Activated naive CD4-positive, alpha-beta T cell treated with anti-CD3 and anti-CD28 coated beads for 36 hours (primary cell): ENCODE measurements at regions of chr19 and their contacts with region 1.

Region 1: DNA sequence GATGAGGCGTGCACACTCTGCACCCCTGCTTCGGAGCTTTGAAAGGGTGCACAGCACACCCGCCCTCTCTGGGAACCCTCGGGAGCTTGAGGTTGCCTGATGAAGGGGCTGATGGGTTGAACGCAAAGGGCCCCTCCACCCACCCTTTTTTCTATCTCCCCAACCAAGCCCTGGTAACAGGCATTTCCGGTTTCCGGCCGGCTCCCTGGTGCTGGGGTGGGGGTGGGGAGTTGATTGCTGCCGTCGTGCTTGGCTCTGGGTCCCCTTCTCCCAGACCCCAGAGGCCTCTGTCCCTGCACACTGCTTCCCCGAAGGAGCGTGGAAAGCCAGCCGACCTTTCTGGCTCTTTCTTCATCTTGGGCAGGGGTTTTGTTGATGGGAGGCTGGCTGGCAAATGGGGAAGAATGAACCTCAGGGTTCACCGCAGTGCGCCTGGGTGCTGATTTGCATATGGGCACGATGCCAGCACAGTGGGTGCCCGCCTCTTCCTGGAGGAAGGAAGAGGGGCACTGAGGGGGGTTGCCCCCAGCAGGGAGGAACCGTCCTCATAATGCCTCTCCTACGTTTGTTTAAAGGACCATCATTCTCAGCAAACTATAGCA is 29.1 kb downstream of the VAV1 start:
- DNase-seq: peak; percentile 90
- H3K4me3 Mint-ChIP-seq: peak overlapping the region; percentile 69
- H3K27ac Mint-ChIP-seq: peak overlapping the region; percentile 89
- H3K4me1 Mint-ChIP-seq: peaks cover 65% of the 10 kb centered on the region
- H3K27me3 Mint-ChIP-seq: no peaks in the 10 kb centered on the region

Region 2: DNA sequence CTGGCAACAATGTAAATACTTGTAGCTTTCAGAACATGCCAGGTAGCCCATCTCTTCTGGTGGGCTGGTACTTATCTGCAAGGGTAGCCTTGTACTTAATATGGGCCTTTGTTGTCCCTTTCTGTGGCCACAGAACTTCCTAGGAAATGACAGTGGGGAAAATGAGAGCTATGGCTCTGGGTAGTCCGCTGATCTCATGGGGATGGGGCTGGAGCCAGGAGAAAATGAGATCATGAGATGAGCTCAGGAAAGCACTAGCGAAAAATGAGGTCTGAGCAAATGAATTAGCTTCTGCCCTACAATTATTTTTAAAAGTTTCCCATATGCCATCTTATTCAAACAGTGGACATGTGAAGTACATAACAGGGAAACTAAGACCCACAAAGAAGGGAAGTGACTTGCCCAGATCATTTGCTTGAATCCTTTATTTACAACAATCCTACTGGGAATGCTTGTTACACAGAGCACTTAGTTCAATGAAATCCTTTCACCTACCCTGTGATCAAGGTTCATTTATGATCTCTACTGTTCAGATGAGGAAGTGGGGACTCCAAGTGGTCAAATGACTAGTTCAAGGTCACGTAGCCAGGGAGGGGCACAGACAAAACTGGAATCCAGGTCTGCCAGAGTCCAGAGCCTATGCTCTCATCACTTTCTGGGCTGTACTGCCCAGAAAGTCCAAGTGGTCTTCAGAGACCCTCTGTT is 1548.0 kb before region 1 on chr19:
- CTCF ChIA-PET with region 1: no interaction called
- intact Hi-C with region 1: no loop called
- DNase-seq: no peak
- H3K4me3 Mint-ChIP-seq: no peak overlapping the region
- H3K27ac Mint-ChIP-seq: no peak overlapping the region
- H3K4me1 Mint-ChIP-seq: no peaks in the 10 kb centered on the region
- H3K27me3 Mint-ChIP-seq: no peaks in the 10 kb centered on the region

Region 3: DNA sequence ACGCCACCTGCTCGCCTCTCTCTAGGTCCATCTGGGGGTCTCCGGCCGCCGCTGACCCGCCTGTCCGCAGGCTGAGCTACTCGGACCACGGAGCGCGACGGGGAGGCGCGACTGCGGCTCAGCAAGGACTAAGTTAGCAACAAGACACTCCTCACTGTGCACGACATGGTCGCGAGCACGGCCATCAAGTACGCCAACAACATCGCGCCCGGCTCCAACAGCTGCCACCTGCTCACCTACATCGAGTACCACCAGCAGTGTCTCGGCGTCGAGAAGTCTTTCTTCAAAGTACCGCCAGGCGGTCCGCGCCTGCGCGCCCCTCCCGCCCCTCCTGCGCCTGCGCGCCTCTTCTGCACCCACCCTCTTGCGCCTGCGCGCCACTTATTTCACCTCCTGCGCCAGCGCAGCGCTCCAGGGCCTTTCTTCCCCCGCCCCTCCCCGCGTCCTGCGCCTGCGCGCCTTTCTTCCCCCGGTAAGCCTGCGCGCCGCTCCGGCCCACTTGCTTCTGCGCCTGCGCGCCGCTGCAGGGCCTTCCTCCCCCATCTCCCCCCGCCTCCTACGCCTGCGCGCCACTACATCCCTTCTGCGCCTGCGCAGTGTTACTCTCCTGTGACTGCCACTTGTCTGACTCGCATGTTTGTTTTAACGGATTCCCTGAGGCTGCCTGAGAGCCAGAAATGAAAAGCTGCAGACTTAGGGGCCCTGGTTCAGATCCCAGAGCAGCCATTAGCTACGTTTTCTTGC is 602.2 kb before region 1 on chr19:
- CTCF ChIA-PET with region 1: no interaction called
- intact Hi-C with region 1: loop called (anchors 5 kb)
- DNase-seq: peak; percentile 99
- H3K4me3 Mint-ChIP-seq: peak overlapping the region; percentile 99
- H3K27ac Mint-ChIP-seq: peak overlapping the region; percentile 79
- H3K4me1 Mint-ChIP-seq: peaks cover 12% of the 10 kb centered on the region
- H3K27me3 Mint-ChIP-seq: no peaks in the 10 kb centered on the region

Region 4: DNA sequence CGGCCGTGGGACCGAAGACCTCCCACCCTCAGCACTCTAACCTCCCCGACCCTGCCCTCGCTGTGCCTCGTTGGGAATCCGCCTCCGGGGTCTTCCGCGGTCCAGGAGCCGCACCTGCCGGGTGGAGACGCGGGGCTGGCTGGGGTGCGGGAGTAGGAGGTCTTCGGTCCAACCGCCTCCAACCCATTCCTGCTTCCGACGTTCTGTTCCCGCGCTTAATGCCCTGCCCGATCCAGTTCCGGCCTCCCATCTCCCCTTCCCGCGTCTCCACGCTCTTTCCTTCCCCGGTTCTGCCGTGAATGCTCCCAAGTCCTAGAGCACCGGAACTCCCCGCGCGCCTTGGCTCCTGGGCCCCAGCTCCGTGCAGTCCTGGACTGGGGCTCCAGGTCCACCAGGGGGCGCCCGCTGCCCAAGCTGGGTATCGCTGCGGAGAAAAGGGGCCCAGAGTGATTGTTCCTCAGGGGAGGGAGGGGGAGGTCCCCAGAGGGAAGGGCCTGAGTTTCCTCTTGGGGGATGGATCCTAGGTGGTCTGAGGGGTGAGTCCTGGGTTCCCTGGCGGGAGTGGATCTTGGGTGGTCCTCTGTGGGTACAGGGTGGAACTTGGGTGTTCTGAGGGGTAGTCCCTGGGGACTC is 284.8 kb before region 1 on chr19:
- CTCF ChIA-PET with region 1: no interaction called
- intact Hi-C with region 1: loop called (anchors 1 kb)
- DNase-seq: peak; percentile 96
- H3K4me3 Mint-ChIP-seq: peak overlapping the region; percentile 89
- H3K27ac Mint-ChIP-seq: peak overlapping the region; percentile 80
- H3K4me1 Mint-ChIP-seq: peaks cover 27% of the 10 kb centered on the region
- H3K27me3 Mint-ChIP-seq: no peaks in the 10 kb centered on the region

Region 5: DNA sequence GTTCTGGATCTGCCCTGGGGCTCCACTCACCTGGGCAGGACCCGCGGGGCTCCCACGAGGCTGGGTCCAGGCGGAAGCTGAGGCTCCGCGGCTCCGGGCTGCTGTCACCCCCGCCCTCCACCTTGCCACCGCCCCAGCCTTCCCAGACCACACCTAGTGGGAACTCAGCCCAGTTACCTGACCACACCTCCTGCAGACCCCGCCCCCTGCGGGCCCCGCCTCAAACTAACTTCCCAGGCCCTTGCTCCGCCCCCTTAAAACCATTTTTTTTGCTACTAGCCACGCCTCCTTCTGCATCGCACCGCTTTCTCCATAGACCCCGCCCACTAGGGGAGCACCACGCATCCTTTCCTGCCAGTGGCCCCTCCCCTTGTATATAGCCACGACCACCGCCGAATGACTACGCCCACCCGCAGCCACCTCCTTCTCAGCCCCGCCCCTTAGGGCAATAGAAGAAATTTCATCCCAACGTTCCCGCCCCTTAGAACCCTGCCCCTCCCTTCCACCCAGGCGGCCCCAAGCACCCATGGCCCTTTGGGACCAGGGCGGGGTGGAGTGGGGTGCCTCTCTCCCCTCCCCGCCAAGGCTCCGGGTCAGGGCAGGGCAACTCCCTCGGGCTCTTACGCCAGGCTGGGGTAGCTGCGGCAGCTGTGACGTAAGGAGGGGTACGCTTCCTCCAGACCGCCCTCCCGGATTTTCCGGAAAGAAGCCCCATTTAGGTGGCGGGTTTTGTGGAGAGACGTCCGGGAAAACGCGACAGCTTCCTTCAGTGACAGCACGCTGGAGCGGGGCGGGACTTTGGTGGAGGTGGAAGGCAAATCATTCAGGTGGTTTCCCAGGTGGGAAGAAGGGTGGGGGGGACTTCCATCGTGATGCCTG is 34.0 kb before region 1 on chr19 and contains the start of gene SH2D3A:
- CTCF ChIA-PET with region 1: interaction called, 7 read pairs
- intact Hi-C with region 1: loop called (anchors 1 kb)
- DNase-seq: peak; percentile 98
- H3K4me3 Mint-ChIP-seq: peak within 1 kb of the TSS; percentile 94
- H3K27ac Mint-ChIP-seq: peak within 1 kb of the TSS; percentile 91
- H3K4me1 Mint-ChIP-seq: peaks cover 39% of the 10 kb centered on the region
- H3K27me3 Mint-ChIP-seq: no peaks in the 10 kb centered on the region
- total RNA-seq, gene SH2D3A: 23.2 to 24.9 TPM

Region 6: GRCh38 chr19:6790194-6791128 is 11.1 kb before region 1 on chr19:
- CTCF ChIA-PET with region 1: no interaction called
- intact Hi-C with region 1: no loop called
- DNase-seq: no peak
- H3K4me3 Mint-ChIP-seq: no peak overlapping the region
- H3K27ac Mint-ChIP-seq: no peak overlapping the region
- H3K4me1 Mint-ChIP-seq: peaks cover 70% of the 10 kb centered on the region
- H3K27me3 Mint-ChIP-seq: no peaks in the 10 kb centered on the region

Region 7: GRCh38 chr19:6813659-6814058 is 12.1 kb after region 1 on chr19:
- CTCF ChIA-PET with region 1: interaction called, 7 read pairs
- intact Hi-C with region 1: loop called (anchors 1 kb)
- DNase-seq: no peak
- H3K4me3 Mint-ChIP-seq: no peak overlapping the region
- H3K27ac Mint-ChIP-seq: peak overlapping the region; percentile 75
- H3K4me1 Mint-ChIP-seq: peaks cover 75% of the 10 kb centered on the region
- H3K27me3 Mint-ChIP-seq: no peaks in the 10 kb centered on the region